ENCODE measurements at regions of chr12 and their contacts with region 1.

Region 1: DNA sequence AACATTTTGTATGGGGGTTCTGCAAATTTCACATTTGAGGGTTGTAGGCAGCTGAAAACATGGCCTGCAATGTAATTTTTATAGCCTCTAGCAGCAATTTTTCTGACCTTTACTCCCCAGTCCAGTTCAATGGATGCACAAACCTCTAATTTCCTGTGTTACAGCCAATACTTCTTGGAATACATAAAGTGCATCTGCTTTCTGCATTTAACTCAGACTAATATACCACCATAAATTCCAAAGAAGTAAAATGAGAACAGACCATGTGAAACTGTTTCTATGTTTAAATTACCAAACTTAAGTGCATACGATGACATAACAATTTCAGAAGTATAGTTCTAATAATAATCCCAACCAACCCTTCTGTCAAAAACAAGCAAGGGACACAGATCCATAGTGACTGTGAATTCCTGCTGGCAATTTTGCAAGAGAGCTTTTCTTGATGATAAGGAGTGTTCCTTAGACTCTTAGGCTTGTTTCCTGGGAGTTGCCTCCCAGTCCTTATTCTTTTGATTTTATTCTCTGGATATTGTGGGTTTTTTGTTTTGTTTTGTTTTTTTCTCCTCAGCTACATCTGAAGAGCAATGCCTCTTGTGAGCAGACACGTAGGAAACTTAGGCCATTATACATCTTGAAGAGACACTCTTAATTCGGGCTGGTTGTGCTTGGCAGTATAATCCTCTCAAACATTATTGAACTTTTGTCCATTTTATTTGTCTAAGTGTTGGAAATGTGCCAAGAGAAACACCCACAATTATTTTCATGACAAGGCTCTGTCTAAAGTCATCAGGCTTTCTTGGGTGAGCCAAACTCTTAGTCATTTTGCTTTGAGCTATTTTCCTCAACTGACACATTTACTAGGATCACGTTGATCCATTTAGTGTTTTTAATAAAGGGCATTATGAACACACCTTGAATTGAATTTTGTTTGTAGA is 51.3 kb upstream of the RERGL start:
- DNase-seq: peak in 1 of 2 experiments; percentile 4
- H3K4me3 ChIP-seq: no peak overlapping the region
- H3K27ac ChIP-seq: no peak overlapping the region
- H3K4me1 ChIP-seq: peaks cover 5% of the 10 kb centered on the region; the same call in 1 of the 2 replicates
- H3K27me3 ChIP-seq: no peaks in the 10 kb centered on the region
- CTCF ChIP-seq: no peak

Region 2: GRCh38 chr12:17841496-17841895 is 299.8 kb before region 1 on chr12:
- CTCF ChIA-PET with region 1: no interaction called
- POLR2A ChIA-PET with region 1: no interaction called
- intact Hi-C with region 1: no loop called
- DNase-seq: no peak
- H3K4me3 ChIP-seq: no peak overlapping the region
- H3K27ac ChIP-seq: no peak overlapping the region
- H3K4me1 ChIP-seq: no peaks in the 10 kb centered on the region
- H3K27me3 ChIP-seq: no peaks in the 10 kb centered on the region
- CTCF ChIP-seq: no peak

Region 3: GRCh38 chr12:18224745-18225144 is 83.4 kb after region 1 on chr12:
- CTCF ChIA-PET with region 1: no interaction called
- POLR2A ChIA-PET with region 1: no interaction called
- intact Hi-C with region 1: loop called (anchors 1 kb)
- DNase-seq: no peak
- H3K4me3 ChIP-seq: no peak overlapping the region
- H3K27ac ChIP-seq: no peak overlapping the region
- H3K4me1 ChIP-seq: no peaks in the 10 kb centered on the region
- H3K27me3 ChIP-seq: no peaks in the 10 kb centered on the region
- CTCF ChIP-seq: peak; percentile 60

Measured in PC-9 (cell line).